Ovary (tissue), 10 donors: ENCODE measurements at regions of chr1 and their contacts with region 1.

Region 1: GRCh38 chr1:229117664-229118300 is 153.1 kb upstream of the RAB4A start:
- DNase-seq: peak; percentile 64 to 86 (median 81)
- H3K4me3 ChIP-seq: no peak overlapping the region
- H3K27ac ChIP-seq: no peak overlapping the region
- H3K4me1 ChIP-seq: peaks cover 6% of the 10 kb centered on the region
- H3K27me3 ChIP-seq: no peaks in the 10 kb centered on the region
- CTCF ChIP-seq: no peak
- EP300 ChIP-seq: no peak
- POLR2A ChIP-seq: no peak

Region 2: DNA sequence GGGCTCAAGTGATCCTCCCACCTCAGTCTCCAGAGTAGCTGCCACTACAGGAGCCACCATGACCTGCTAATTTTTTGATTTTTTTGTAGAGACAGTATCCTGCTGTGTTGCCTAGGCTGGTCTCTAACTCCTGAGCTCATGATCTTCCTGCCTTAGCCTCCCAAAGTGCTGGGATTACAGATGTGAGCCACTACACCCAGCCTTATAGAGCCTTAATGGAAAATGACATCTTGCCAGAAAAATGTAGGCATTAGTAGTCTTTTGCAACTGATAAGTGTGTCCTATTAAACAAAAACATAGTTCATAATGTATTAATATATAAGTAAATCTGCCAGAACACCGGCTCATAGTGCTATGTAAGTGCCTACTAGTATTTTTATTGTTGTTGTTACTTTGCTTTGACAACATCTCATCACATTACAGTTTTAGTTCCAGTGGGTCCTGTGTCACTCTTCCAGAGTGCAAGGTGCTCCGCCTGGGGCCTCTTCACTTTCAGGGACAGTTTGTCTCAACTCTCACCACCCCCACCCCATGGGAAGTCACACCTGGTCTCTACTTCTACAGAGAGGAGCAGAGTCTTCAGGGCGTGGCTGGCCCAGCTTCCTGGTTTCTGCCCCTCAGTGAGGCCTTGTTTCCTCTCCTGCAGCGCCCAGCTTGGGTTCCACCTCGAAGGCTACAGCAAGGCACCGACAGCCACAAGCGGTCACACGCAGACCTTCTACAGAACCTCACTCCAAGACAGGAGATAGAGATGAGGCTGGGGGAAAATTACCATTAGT is 352.4 kb before region 1 on chr1:
- intact Hi-C with region 1: loop called in 1 of 4 experiments (anchors 10 kb)
- DNase-seq: no peak
- H3K4me3 ChIP-seq: no peak overlapping the region
- H3K27ac ChIP-seq: no peak overlapping the region
- H3K4me1 ChIP-seq: no peaks in the 10 kb centered on the region
- H3K27me3 ChIP-seq: no peaks in the 10 kb centered on the region
- CTCF ChIP-seq: no peak
- EP300 ChIP-seq: no peak
- POLR2A ChIP-seq: no peak